Sigmoid colon (tissue), 7 donors: ENCODE measurements at regions of chr18 and their contacts with region 1.

Region 1: DNA sequence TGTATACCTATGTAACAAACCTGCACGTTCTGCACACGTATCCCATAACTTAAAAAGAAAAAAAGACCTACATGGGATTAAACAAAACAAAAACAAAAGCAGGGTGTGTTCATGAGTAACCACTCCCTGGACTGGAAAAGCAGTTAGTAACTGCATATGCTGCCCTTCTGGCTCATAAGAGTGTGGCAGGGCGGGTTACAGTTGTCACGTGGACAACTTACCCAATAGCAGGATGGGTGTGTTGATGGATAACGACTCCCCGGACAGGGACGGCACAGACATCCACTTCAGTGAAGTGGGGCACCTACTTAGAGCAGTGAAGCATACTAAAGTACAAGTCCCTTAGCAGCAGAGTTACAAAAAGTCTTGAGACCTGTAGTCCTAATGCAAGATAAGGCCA is 136.7 kb downstream of the CCBE1 start:
- DNase-seq: no peak
- H3K4me3 ChIP-seq: no peak overlapping the region
- H3K27ac ChIP-seq: no peak overlapping the region
- H3K4me1 ChIP-seq: peaks cover 0 to 52% (median 23%) of the 10 kb centered on the region in 4 donors
- H3K27me3 ChIP-seq: no peaks in the 10 kb centered on the region
- CTCF ChIP-seq: no peak
- EP300 ChIP-seq: no peak
- POLR2A ChIP-seq: no peak

Region 2: DNA sequence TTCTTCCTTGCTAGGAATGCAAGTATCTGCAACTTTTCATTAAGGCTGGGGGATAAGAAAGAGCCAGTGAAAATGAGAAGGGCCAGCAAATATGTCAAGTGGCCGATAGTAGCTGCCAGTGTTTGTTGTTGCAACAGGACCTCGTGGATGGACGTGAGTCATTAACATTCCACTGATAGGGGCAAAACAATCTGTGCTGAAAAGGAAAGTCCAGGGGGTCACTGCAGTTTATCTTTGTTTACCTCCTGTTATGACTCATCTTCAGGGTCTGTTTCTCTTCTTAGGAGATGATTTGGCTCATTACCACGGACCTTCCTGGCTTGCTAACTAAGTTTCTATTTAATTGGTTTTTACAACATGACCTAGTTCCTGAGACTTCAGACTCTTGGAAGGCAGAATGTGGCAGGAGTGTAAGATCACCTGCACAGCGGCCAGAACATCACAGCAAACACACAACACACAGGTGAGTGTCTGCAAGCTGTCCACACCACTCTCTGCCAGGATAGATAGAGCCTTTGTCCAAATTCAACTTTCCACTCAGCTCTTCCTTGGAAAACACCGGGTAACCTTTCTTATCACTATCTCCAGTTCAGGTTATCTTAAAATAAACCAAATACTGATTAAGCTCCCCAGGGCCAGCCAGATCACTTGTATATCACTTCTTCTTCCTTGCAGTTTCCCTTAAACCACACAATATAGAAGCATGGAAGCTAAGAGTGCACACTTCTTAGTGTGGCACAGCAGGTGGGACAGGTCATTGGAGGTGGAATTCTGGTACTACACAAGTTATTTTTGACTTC is 44.0 kb before region 1 on chr18:
- intact Hi-C with region 1: loop called (anchors 5 kb)
- DNase-seq: peak; percentile 79
- H3K4me3 ChIP-seq: no peak overlapping the region
- H3K27ac ChIP-seq: peak overlapping the region in 3 of 4 donors; percentile 76 to 82 (median 82)
- H3K4me1 ChIP-seq: peaks cover 0 to 65% (median 54%) of the 10 kb centered on the region in 4 donors
- H3K27me3 ChIP-seq: no peaks in the 10 kb centered on the region
- CTCF ChIP-seq: no peak
- EP300 ChIP-seq: peak in 3 of 4 donors; percentile 6 to 72 (median 56)
- POLR2A ChIP-seq: no peak